PC-3 (cell line): ENCODE measurements at regions of chr19 and their contacts with region 1.

Region 1: DNA sequence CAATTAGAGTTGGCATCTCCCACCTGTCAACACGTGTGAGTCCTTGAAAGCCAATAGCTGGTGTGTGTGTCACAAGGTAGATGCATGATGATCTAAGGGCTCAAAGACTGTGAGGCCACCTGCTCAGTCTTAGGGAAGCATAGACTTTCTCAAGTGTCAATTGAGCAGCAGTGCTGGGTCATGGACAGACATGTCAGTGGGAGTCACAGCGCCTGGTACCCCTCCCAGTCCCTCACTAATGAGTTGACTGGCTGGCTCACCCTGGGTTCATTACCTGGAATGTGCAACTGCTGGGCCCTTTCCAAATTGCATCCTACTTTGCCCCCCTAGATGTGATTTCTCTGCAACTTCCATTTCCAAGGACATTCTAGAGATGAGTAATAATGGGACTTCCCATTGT is 9.1 kb upstream of the PSG6 start:
- DNase-seq: no peak
- ATAC-seq: no peak
- H3K4me3 ChIP-seq: no peak overlapping the region
- H3K27ac ChIP-seq: no peak overlapping the region
- H3K4me1 ChIP-seq: no peaks in the 10 kb centered on the region
- H3K27me3 ChIP-seq: no peaks in the 10 kb centered on the region
- CTCF ChIP-seq: no peak

Region 2: DNA sequence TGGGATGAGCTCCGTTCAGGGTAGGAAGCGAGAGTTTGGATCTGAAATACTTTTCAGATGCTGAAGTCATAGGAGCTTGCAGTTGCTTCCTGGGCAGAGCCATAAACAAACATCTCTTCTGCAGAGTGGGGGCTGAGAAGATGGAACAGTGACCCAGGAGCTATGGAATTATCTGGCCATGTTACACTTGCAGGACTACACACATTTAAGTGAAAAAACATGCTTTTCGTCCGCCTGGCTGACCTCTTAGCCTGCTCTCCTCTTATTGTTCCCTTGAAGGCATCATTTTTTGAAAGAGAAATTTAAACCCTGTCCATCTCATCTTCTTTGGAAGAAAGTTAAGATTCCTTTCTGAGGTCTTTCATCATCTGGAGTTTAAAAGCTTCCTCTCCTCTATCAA is 58.8 kb after region 1 on chr19:
- CTCF ChIA-PET with region 1: no interaction called
- POLR2A ChIA-PET with region 1: no interaction called
- intact Hi-C with region 1: no loop called
- DNase-seq: no peak
- ATAC-seq: no peak
- H3K4me3 ChIP-seq: no peak overlapping the region
- H3K27ac ChIP-seq: no peak overlapping the region
- H3K4me1 ChIP-seq: no peaks in the 10 kb centered on the region; the same call in 1 of the 2 replicates
- H3K27me3 ChIP-seq: no peaks in the 10 kb centered on the region
- CTCF ChIP-seq: no peak

Region 3: GRCh38 chr19:43028861-43029260 is 102.1 kb after region 1 on chr19:
- CTCF ChIA-PET with region 1: no interaction called
- POLR2A ChIA-PET with region 1: no interaction called
- intact Hi-C with region 1: loop called (anchors 5 kb)
- DNase-seq: no peak
- ATAC-seq: no peak
- H3K4me3 ChIP-seq: no peak overlapping the region
- H3K27ac ChIP-seq: no peak overlapping the region
- H3K4me1 ChIP-seq: no peaks in the 10 kb centered on the region
- H3K27me3 ChIP-seq: no peaks in the 10 kb centered on the region
- CTCF ChIP-seq: no peak